ENCODE measurements at regions of chr5 and their contacts with region 1.

Region 1: GRCh38 chr5:85621668-85622067 is 996.1 kb upstream of the COX7C start:
- DNase-seq: no peak
- ATAC-seq: no peak
- H3K4me3 ChIP-seq: no peak overlapping the region
- H3K27ac ChIP-seq: no peak overlapping the region
- H3K4me1 ChIP-seq: no peaks in the 10 kb centered on the region
- H3K27me3 ChIP-seq: no peaks in the 10 kb centered on the region
- CTCF ChIP-seq: no peak

Region 2: DNA sequence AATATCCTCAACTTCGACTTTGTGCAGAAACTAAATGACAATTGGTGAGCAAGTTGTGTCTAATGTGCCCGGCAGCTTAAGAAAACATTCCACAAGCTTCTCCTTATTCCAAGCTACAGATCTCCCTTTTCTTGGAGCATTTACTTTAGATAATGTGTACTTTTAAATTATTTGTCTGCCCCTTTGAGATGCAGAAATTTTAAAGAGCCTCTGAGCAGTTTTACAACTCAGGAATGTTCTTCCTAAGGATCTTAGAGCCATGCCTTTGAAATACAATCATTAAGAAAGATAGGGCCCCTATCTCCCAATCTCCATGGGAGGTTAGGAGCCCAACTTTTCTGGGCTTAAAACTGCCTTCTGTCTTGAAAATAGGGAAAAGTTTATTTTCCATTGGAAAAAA is 272.3 kb after region 1 on chr5:
- CTCF ChIA-PET with region 1: no interaction called
- POLR2A ChIA-PET with region 1: interaction called, 11 read pairs
- in situ Hi-C with region 1: no loop called
- intact Hi-C with region 1: no loop called
- DNase-seq: no peak
- ATAC-seq: no peak
- H3K4me3 ChIP-seq: no peak overlapping the region
- H3K27ac ChIP-seq: no peak overlapping the region
- H3K4me1 ChIP-seq: no peaks in the 10 kb centered on the region
- H3K27me3 ChIP-seq: no peaks in the 10 kb centered on the region
- CTCF ChIP-seq: no peak

Measured in Panc1 (cell line).